PC-3 (cell line): ENCODE measurements at regions of chr11 and their contacts with region 1.

Region 1: GRCh38 chr11:75142714-75143419 is 8.0 kb upstream of the SLCO2B1 start:
- DNase-seq: peak; percentile 94
- ATAC-seq: peak; percentile 98
- H3K4me3 ChIP-seq: 0 out of 2 replicates have a peak overlapping the region, but pooled peaks have one; percentile 26
- H3K27ac ChIP-seq: 0 out of 2 replicates have a peak overlapping the region, but pooled peaks have one; percentile 10
- H3K4me1 ChIP-seq: peaks cover 11% of the 10 kb centered on the region
- H3K27me3 ChIP-seq: peaks cover 32% of the 10 kb centered on the region
- CTCF ChIP-seq: no peak

Region 2: GRCh38 chr11:74929431-74930363 is 213.2 kb before region 1 on chr11:
- CTCF ChIA-PET with region 1: interaction called, 4 read pairs
- POLR2A ChIA-PET with region 1: no interaction called
- intact Hi-C with region 1: loop called (anchors 1 kb)
- DNase-seq: peak; percentile 95
- ATAC-seq: peak; percentile 73
- H3K4me3 ChIP-seq: no peak overlapping the region
- H3K27ac ChIP-seq: no peak overlapping the region
- H3K4me1 ChIP-seq: peaks cover 51% of the 10 kb centered on the region
- H3K27me3 ChIP-seq: no peaks in the 10 kb centered on the region
- CTCF ChIP-seq: peak; percentile 99

Region 3: DNA sequence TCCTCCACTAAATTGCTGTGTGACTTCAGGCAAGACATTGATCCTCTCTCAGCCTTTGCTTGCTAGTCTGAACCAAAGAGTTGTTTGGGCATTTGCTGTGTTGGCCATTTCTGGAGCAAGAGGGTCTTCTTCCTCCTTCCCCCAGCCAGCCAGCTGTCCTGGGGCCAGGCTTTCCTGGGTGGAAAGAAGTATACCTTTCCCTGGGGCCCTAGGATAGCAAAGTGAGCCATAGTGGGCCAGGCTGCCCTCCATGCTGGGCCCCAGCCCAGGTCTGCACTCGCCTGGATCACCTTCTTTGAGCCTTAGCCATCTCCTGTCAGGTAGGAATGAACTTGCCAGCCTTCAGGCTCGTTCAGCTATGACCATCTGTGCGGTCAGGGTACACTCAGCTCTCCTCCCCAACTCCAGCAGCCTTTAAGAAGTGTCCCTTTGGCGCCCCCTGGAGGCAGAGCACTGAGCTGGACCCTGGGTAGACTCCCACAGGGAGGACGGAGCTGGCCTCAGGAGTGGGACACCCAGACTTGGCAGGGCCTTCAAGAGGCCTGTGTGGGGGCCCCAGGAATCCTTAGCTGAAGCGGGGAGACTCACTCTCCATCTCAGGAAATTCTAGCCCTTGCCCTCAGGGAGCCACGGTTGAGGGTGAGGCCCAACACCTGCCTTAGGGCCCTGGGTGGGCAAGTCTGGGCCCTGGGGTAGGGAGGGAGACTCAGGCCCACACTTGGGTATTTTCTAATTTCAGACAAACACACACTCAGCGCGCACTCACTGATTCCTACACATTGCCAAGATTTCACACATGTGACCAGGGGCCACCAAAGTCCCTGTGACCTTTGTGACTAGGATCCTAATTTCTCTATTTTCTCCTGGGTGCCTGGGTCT is 62.1 kb after region 1 on chr11:
- CTCF ChIA-PET with region 1: interaction called, 38 read pairs
- POLR2A ChIA-PET with region 1: no interaction called
- intact Hi-C with region 1: loop called (anchors 1 kb)
- DNase-seq: peak; percentile 91
- ATAC-seq: peak; percentile 100
- H3K4me3 ChIP-seq: no peak overlapping the region
- H3K27ac ChIP-seq: no peak overlapping the region
- H3K4me1 ChIP-seq: no peaks in the 10 kb centered on the region
- H3K27me3 ChIP-seq: peaks cover 44% of the 10 kb centered on the region
- CTCF ChIP-seq: peak; percentile 98

Region 4: DNA sequence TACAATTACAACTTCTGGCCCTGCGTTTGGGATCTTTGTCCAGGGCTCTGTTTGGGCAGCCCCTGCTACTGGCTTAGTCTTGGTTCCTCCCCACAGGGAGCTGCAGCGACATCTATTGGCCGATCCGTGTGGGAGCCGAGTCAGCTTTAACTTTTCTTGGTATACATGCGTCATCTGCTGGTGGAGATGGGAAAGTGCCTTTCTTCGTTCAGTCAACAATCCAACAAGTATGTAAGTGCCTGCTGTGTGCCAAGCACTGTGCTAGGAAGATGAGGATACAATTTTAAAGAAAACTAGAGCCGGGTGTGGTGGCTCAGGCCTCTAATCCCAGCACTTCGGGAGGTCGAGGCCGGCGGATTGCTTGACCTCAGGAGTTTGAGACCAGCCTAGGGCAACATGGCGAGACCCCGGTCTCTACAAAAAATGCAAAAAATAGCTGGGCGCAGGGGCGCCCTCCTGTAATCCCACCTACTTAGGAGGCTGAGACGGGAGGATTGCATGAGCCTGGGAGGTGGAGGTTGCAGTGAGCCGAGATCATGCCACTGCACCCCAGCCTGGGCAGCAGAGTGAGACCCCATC is 105.9 kb after region 1 on chr11:
- CTCF ChIA-PET with region 1: interaction called, 24 read pairs
- POLR2A ChIA-PET with region 1: no interaction called
- intact Hi-C with region 1: loop called (anchors 1 kb)
- DNase-seq: peak; percentile 97
- ATAC-seq: peak; percentile 93
- H3K4me3 ChIP-seq: no peak overlapping the region
- H3K27ac ChIP-seq: no peak overlapping the region
- H3K4me1 ChIP-seq: no peaks in the 10 kb centered on the region
- H3K27me3 ChIP-seq: peaks cover 22% of the 10 kb centered on the region
- CTCF ChIP-seq: peak; percentile 100